ENCODE measurements at regions of chr17 and their contacts with region 1.

Region 1: DNA sequence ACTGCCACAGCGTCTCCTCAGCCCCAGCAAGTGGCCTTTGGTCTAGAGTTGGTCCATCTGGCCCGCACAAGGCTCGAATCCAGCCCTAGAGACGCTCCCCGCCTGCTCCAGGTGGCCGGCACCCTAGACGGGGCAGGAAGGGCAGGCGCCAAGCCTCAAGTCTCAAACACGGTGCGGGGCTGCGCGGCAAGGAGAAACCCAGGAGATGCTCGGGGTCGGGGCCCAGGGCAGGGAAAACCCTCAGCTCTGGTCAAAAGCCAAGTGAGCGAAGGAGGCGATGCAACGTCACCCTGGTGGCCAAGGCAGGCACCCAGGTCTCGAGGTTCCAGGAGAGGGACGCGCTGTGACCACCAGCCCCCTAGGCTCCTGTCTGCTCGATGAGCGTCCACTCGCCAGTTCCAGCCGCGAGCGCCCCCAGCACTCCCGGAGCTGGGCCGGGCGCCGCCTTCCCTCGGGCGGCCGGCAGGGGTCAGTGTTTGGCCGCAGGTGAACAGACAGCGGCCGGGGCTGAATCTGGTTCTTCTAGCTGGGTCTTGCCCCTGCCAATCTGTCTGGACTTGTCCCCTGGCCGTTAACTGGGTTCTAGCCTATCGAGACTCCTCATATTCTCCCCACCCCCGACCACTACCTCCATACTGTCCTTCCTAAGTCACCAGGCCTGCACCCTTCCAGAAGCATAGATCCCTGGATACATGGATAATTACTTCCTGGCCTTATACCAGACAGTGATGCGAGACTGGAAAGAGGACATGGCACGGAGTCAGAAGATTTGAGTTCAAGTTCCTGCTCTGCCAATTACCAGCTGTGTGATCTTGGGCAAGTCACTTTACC is 44.0 kb downstream of the PRAC1 start:
- DNase-seq: peak; percentile 92
- H3K4me3 Mint-ChIP-seq: no peak overlapping the region
- H3K27ac Mint-ChIP-seq: no peak overlapping the region
- H3K4me1 Mint-ChIP-seq: peaks cover 5% of the 10 kb centered on the region
- H3K27me3 Mint-ChIP-seq: peaks cover 63% of the 10 kb centered on the region

Region 2: DNA sequence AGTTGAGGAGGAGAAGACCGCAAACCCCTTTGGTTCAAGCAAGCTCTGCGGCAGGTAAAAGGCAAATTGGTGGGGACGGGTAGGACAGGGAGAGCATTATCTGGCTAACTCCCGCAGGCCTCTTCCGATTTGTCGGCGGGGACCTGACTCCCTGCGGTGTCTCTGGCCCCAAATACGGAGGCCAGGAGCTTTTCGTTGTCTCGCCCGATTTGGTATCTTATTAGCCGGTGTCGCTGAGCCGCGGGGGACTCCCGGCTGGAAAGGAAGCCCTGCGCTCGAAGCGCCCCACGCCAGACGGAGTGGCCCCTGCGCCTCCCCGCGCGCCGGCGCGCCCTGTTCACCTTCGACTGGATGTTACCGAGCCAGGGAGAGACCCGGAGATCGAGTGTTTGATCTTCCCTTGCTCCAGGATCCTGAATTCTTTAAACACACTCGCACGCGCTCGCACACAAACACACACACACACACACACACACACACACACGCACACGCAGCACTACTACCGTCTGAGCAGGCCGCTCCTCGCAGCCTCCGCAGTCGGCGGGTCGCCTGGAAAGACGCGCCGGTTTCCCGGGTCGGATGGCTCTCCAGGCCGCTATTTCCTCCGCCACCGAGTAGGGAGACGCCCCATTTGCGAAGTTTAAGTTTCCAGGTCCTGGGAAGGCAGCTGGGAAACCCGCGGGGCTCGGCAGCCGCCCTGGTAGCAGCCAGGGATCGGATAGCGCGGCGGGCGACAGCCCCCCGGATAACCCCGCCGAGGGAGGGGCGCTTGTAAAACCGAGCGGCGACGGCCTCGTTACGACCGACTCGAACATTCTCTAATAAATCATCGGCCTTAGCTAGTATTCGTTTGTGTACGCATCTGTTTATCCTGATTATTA is 40.6 kb after region 1 on chr17:
- intact Hi-C with region 1: loop called (anchors 5 kb)
- DNase-seq: no peak
- H3K4me3 Mint-ChIP-seq: no peak overlapping the region
- H3K27ac Mint-ChIP-seq: peak overlapping the region; percentile 41
- H3K4me1 Mint-ChIP-seq: peaks cover 14% of the 10 kb centered on the region
- H3K27me3 Mint-ChIP-seq: peaks cover 86% of the 10 kb centered on the region

Region 3: DNA sequence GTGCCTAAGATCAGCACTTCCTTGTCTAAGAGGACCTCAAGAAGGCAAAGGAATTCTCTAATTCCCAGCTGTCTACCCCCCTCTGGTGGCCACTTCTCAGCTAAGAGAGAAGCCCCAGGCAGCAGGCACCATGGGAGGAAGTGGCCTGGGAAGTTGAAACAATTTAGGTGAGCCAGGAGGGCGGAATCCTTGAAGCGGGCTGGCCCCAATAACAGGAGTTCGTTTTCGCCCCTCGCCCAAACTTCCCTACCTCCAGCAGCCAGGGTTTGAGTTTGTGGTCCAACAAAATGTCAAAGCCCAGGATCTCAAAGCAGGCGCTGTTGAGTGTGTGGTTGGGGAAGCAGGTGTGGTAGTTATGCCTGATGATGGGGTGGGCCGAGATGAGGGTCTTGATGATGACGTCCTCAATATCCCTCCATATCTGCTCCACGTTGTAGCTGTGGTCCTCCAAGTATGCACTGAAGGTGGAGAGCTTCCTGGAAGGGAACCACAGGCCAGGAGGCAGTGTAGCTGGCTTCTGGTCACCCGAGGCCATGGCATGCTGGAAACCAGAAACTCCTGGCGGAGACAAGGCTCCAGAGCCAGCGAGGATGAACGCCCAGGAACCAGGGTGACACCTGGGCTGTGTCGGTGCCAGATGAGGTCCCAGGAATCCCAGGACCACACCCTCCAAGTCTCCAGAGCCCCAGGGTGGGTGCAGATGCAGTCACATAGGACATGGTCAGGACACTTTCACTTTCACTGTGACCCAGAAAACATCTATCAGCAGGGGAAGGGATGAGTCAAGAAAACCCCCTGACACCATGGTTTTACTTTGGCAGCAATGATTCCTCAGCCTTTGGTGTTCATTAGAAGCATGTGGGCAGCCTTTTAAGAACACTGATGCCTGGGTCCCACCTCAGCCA is 113.0 kb after region 1 on chr17:
- intact Hi-C with region 1: loop called (anchors 5 kb)
- DNase-seq: peak; percentile 73
- H3K4me3 Mint-ChIP-seq: no peak overlapping the region
- H3K27ac Mint-ChIP-seq: no peak overlapping the region
- H3K4me1 Mint-ChIP-seq: peaks cover 18% of the 10 kb centered on the region
- H3K27me3 Mint-ChIP-seq: peaks cover 47% of the 10 kb centered on the region

Measured in activated CD4-positive, alpha-beta T cell treated with anti-CD3 and anti-CD28 coated beads, Interleukin-2, amount 10 ng/mL, durations not matched to agents 24 days and 14 days (primary cell).